Activated T-helper 2 cell treated with anti-CD3 and anti-CD28 coated beads, Interferon-gamma antibody, Interleukin-2, Interleukin-4, amounts not matched to agents 10 μg/mL and 5 μg/mL and 100 μg/mL, durations not matched to agents 14 hours and 24 hours and 36 hours (primary cell): ENCODE measurements at regions of chr1 and their contacts with region 1.

Region 1: DNA sequence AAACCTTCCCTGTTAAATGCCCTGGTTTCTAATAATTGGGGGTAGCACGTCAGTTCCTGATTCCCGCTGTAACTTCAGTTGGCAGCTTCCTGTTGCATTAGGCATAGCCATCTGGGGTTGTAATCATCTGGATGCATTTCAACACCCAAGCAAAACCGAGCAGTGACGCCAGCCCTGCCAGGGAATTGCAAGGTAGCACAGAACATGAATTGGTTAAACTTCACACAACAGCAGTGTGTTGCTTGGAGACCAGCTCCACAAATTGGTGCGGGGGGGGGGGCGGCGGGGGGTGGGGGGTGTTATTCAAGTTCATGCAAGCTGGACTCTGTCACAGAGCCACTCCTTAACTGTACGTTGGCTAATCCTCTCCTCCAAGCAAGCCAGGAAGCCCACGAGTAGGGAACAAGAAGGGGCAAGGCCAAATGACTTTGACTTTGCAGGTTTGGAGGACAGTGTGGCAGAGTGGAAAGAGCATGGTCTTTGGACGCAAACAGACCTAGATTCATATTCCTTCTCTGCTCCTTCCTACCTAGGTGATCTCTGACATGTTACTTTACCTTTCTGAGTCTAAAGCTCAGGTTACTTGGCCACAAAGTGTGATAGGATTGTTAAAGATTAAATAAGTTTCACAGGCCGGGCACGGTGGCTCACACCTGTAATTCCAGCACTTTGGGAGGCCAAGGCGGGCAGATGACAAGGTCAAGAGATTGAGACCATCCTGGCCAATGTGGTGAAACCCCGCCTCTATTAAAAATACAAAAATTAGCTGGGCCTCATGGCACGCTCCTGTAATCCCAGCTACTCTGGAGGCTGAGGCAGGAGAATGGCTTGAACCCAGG is 4.7 kb downstream of the LAX1 start:
- DNase-seq: no peak
- H3K4me3 Mint-ChIP-seq: no peak overlapping the region
- H3K27ac Mint-ChIP-seq: peak overlapping the region; percentile 34
- H3K4me1 Mint-ChIP-seq: peaks cover 16% of the 10 kb centered on the region
- H3K27me3 Mint-ChIP-seq: no peaks in the 10 kb centered on the region

Region 2: GRCh38 chr1:203673550-203674427 is 95.9 kb before region 1 on chr1:
- intact Hi-C with region 1: loop called (anchors 5 kb)
- DNase-seq: peak; percentile 73
- H3K4me3 Mint-ChIP-seq: peak overlapping the region; percentile 69
- H3K27ac Mint-ChIP-seq: peak overlapping the region; percentile 94
- H3K4me1 Mint-ChIP-seq: peaks cover 55% of the 10 kb centered on the region
- H3K27me3 Mint-ChIP-seq: no peaks in the 10 kb centered on the region

Region 3: GRCh38 chr1:203733009-203733863 is 36.5 kb before region 1 on chr1:
- intact Hi-C with region 1: no loop called
- DNase-seq: no peak
- H3K4me3 Mint-ChIP-seq: no peak overlapping the region
- H3K27ac Mint-ChIP-seq: peak overlapping the region; percentile 31
- H3K4me1 Mint-ChIP-seq: no peaks in the 10 kb centered on the region
- H3K27me3 Mint-ChIP-seq: no peaks in the 10 kb centered on the region

Region 4: GRCh38 chr1:203754455-203754864 is 15.3 kb before region 1 on chr1:
- intact Hi-C with region 1: loop called (anchors 1 kb)
- DNase-seq: no peak
- H3K4me3 Mint-ChIP-seq: no peak overlapping the region
- H3K27ac Mint-ChIP-seq: peak overlapping the region; percentile 87
- H3K4me1 Mint-ChIP-seq: peaks cover 17% of the 10 kb centered on the region
- H3K27me3 Mint-ChIP-seq: no peaks in the 10 kb centered on the region

Region 5: DNA sequence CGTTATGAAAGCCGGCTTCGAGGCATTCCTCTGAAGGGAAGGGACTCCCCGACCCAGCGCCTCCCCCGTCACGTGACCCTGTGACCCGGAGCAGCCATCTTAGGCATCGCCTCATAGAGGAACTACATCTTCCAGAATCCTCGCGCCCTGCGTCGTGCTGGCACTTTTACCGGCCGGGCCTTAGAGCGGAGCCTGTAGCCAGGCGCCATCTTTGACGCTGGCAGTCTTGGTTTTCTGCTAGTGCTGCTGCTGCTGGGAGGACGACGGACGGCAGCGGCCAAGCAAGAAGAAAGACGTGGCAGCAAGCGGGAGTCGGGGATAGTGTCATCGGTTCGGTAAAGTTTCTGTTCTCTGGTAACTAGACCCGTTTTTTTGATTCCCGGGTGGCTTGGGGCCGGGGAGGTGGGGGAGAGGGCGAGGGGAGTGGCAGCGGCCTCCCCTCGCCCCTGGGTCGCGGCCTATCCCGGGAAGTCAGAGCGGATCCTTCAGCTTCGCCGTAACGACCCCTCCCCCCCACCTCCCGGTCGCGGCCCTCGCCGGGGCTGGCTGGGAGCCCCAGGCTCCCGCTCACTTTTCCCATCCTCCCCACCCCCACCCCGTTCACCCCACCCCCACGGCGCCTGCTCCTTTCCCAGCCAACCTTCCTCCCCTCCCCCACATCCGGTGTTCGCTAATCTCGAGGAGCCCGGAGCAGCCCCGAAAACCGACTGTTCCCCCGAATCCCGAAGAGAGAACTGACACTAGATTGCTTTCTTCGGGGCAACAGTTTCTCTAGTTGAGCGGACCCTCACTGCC is 25.9 kb after region 1 on chr1 and contains the starts of genes ZBED6 and ZC3H11A:
- intact Hi-C with region 1: loop called (anchors 1 kb)
- DNase-seq: peak; percentile 98
- H3K4me3 Mint-ChIP-seq: peak within 1 kb of the TSS; percentile 99
- H3K27ac Mint-ChIP-seq: peak within 1 kb of the TSS; percentile 99
- H3K4me1 Mint-ChIP-seq: peaks cover 42% of the 10 kb centered on the region
- H3K27me3 Mint-ChIP-seq: no peaks in the 10 kb centered on the region
- total RNA-seq, gene ZBED6: 21.9 and 22.2 TPM in 2 replicates
- total RNA-seq, gene ZC3H11A: 82.8 and 86.6 TPM in 2 replicates

Region 6: GRCh38 chr1:203807196-203807595 is 37.5 kb after region 1 on chr1:
- intact Hi-C with region 1: no loop called
- DNase-seq: no peak
- H3K4me3 Mint-ChIP-seq: no peak overlapping the region
- H3K27ac Mint-ChIP-seq: peak overlapping the region; percentile 8
- H3K4me1 Mint-ChIP-seq: peaks cover 11% of the 10 kb centered on the region
- H3K27me3 Mint-ChIP-seq: no peaks in the 10 kb centered on the region